AG04449 (cell line): ENCODE measurements at regions of chr6 and their contacts with region 1.

Region 1: DNA sequence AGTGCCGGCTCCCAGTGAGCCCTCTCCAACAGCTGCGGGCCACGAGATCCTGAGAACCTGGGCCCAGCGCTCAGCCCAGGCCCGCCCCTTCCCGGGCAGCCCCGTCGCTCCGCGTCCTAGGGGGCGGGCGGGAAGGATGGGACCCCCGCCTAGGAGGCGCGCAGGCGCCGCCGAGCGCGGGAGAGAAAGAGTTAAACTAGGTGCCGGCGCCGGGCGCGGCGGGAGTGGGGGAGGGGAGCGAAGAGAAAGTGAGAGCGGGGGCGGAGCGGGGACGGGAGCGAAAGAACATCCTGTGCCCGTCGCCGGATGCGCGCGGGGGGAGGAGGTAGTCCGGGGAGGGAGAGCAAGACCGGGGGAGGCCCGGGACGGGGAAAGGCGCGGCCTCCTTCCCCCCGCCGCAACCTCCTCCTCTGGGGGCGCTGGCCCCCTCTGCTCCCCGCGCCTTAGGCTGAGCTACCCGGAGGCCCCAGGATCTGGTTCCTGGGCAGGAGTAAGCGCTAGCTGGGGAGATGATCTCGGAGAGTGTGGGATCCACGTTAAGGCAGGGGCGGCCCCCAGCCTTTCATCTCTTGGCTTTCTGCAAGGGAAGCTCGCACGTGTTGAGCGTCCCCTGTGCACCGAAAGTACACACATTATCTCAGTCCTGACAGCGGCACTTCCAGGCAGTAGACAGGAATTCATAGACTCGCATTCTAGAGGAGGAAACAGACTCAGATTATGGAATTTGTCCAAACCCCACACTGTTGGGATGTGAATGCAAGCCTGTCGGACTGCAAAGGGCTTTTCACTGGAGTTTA is 4.9 kb upstream of the ARMC12 start:
- DNase-seq: peak; percentile 29
- H3K4me3 ChIP-seq: peak overlapping the region; percentile 65
- CTCF ChIP-seq: no peak

Region 2: GRCh38 chr6:35569011-35569461 is 162.9 kb before region 1 on chr6:
- CTCF ChIA-PET with region 1: interaction called, 524 read pairs
- POLR2A ChIA-PET with region 1: no interaction called
- DNase-seq: no peak
- H3K4me3 ChIP-seq: no peak overlapping the region
- CTCF ChIP-seq: peak; percentile 43

Region 3: DNA sequence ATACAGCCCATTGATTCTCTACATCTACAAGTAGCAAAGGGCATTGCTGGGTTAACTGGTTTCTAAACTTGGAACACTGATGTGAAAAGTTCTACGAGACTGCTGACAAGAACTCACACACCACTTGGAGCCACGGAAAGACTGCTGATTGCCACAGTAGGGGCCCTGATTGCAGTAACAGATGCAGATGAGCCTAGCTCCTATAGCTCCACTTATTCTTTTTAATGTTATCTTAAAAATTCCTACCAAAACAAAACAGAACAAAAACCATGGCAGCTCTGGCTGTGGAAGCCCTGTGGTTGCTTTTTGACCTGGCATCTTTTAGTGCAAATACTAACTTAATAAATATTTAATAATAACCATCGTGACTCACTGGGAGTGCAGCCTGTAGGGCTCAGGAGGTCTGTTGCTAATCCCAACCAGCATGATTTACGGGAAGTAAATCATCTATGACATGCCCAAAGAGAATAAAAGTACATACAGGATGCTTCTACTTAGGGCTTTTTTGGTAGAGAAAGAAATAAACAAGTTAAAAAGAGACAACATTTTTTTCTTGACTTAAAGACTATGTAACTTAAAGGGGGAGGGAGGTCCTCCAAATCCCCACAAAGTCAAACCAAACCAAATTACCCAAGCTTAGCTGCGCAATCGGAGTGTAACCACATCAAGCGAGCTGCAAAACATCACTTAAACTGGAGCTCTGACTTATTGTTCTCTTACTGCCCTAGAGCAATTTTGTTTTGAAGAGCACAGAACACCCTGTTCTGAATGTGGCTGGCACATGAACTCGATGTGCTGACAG is 130.4 kb before region 1 on chr6:
- CTCF ChIA-PET with region 1: interaction called, 524 read pairs
- POLR2A ChIA-PET with region 1: no interaction called
- DNase-seq: no peak
- H3K4me3 ChIP-seq: peak overlapping the region; percentile 28
- CTCF ChIP-seq: no peak

Region 4: GRCh38 chr6:35669451-35670045 is 62.4 kb before region 1 on chr6:
- CTCF ChIA-PET with region 1: interaction called, 10 read pairs
- POLR2A ChIA-PET with region 1: no interaction called
- DNase-seq: no peak
- H3K4me3 ChIP-seq: no peak overlapping the region
- CTCF ChIP-seq: no peak

Region 5: GRCh38 chr6:35754448-35755277 is 22.7 kb after region 1 on chr6:
- CTCF ChIA-PET with region 1: interaction called, 88 read pairs
- POLR2A ChIA-PET with region 1: no interaction called
- DNase-seq: no peak
- H3K4me3 ChIP-seq: no peak overlapping the region
- CTCF ChIP-seq: no peak